HCT116 (cell line): ENCODE measurements at regions of chr1 and their contacts with region 1.

Region 1: DNA sequence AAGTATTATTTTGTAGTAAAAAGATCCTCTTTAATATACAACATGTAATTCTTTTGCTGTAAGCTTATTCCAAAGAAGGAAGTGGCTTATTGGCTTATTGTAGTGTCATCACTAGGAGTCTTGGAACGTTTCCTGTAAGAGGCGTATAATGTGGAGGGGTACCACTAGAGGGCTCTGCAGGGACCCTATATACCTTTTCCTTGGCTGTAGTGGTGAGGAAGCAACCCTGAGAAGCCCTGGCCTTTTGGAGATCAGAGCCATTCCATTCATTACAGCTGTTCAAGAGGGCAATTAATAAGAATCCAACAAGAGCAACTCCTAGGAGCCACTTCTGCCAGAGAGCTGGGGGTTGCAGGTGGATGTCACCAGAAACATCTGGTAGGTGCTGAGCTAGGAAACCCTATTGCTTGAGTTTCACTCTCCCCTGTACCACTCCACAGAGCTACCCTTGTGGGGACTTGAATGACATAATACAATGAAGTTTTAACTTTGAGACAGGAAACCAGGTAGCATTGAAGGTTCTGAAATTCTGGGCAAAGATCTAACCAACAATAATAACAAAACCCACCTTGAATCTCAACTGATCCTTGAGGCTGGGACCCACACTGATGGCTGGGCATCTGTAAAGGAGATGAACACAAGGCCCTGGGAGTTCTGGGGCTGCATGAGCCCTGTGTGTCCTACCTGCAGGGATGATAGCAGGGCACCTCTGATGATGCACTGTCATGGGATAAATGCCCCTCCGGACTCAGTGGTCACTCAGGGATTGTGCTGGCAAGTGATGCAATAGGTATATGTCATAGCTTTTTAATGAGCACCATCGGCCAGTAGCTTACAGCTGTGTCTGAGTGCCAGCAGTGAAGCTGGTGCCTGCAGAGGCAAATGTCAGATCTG is 160.2 kb upstream of the COA6 start:
- DNase-seq: no peak
- ATAC-seq: peak; percentile 95
- H3K4me3 ChIP-seq: no peak overlapping the region
- H3K27ac ChIP-seq: no peak overlapping the region
- H3K4me1 ChIP-seq: no peaks in the 10 kb centered on the region; a peak in 1 of 4 replicates
- H3K27me3 ChIP-seq: no peaks in the 10 kb centered on the region
- CTCF ChIP-seq: peak; percentile 47 to 65 (median 62); a peak in 5 of 6 replicates
- POLR2A ChIP-seq: no peak
- RAD21 ChIP-seq: peak; percentile 48

Region 2: GRCh38 chr1:234154320-234155251 is 58.4 kb before region 1 on chr1:
- CTCF ChIA-PET with region 1: no interaction called
- POLR2A ChIA-PET with region 1: no interaction called
- RAD21 ChIA-PET with region 1: no interaction called
- intact Hi-C with region 1: loop called (anchors 2 kb)
- DNase-seq: peak; percentile 70
- ATAC-seq: peak; percentile 98
- H3K4me3 ChIP-seq: no peak overlapping the region
- H3K27ac ChIP-seq: no peak overlapping the region
- H3K4me1 ChIP-seq: no peaks in the 10 kb centered on the region
- H3K27me3 ChIP-seq: no peaks in the 10 kb centered on the region
- CTCF ChIP-seq: peak; percentile 68 to 82 (median 78)
- POLR2A ChIP-seq: no peak
- RAD21 ChIP-seq: peak; percentile 83